ENCODE measurements at regions of chr10 and their contacts with region 1.

Region 1: GRCh38 chr10:102132563-102133372 is at the start of gene PPRC1:
- DNase-seq: peak; percentile 88 to 98 (median 97)
- ATAC-seq: peak; percentile 97
- H3K4me3 ChIP-seq: peak within 1 kb of the TSS; percentile 80
- H3K4me3 Mint-ChIP-seq: peak within 1 kb of the TSS; percentile 90 to 99 (median 98)
- H3K27ac ChIP-seq: peak within 1 kb of the TSS; percentile 89
- H3K27ac Mint-ChIP-seq: peak within 1 kb of the TSS; percentile 89 to 99 (median 96)
- H3K4me1 ChIP-seq: peaks cover 15 to 26% of the 10 kb centered on the region in 2 donors
- H3K4me1 Mint-ChIP-seq: peaks cover 29 to 53% (median 47%) of the 10 kb centered on the region in 7 donors
- H3K27me3 ChIP-seq: no peaks in the 10 kb centered on the region
- H3K27me3 Mint-ChIP-seq: no peaks in the 10 kb centered on the region
- total RNA-seq, gene PPRC1: 33.7 to 56.5 (median 40.6) TPM

Region 2: GRCh38 chr10:102055647-102056419 is 76.9 kb before region 1 on chr10 and contains the start of gene ARMH3:
- CTCF ChIA-PET with region 1: no interaction called
- POLR2A ChIA-PET with region 1: interaction called, 4 read pairs
- intact Hi-C with region 1: loop called (anchors 1 kb)
- DNase-seq: peak; percentile 72 to 90 (median 87)
- ATAC-seq: peak; percentile 98
- H3K4me3 ChIP-seq: peak within 1 kb of the TSS; percentile 92
- H3K4me3 Mint-ChIP-seq: peak within 1 kb of the TSS; percentile 89 to 98 (median 94)
- H3K27ac ChIP-seq: peak within 1 kb of the TSS; percentile 87
- H3K27ac Mint-ChIP-seq: peak within 1 kb of the TSS; percentile 76 to 97 (median 92)
- H3K4me1 ChIP-seq: peaks cover 18 to 20% of the 10 kb centered on the region in 2 donors
- H3K4me1 Mint-ChIP-seq: peaks cover 25 to 50% (median 42%) of the 10 kb centered on the region in 7 donors
- H3K27me3 ChIP-seq: no peaks in the 10 kb centered on the region
- H3K27me3 Mint-ChIP-seq: no peaks in the 10 kb centered on the region
- total RNA-seq, gene ARMH3: 26.7 to 34.0 (median 28.8) TPM

Region 3: GRCh38 chr10:102151774-102152544 is 19.2 kb after region 1 on chr10 and contains the start of gene NOLC1:
- CTCF ChIA-PET with region 1: interaction called, 13 read pairs
- POLR2A ChIA-PET with region 1: interaction called, 10 read pairs
- intact Hi-C with region 1: loop called (anchors 1 kb)
- DNase-seq: peak; percentile 95 to 100 (median 100)
- ATAC-seq: peak; percentile 97
- H3K4me3 ChIP-seq: peak within 1 kb of the TSS; percentile 87
- H3K4me3 Mint-ChIP-seq: peak within 1 kb of the TSS; percentile 91 to 98 (median 96)
- H3K27ac ChIP-seq: peak within 1 kb of the TSS; percentile 94
- H3K27ac Mint-ChIP-seq: peak within 1 kb of the TSS; percentile 91 to 98 (median 96)
- H3K4me1 ChIP-seq: peaks cover 11 to 16% of the 10 kb centered on the region in 2 donors
- H3K4me1 Mint-ChIP-seq: peaks cover 28 to 58% (median 43%) of the 10 kb centered on the region in 7 donors
- H3K27me3 ChIP-seq: no peaks in the 10 kb centered on the region
- H3K27me3 Mint-ChIP-seq: peaks cover 0 to 4% (median 0%) of the 10 kb centered on the region in 5 donors
- total RNA-seq, gene NOLC1: 45.1 to 98.5 (median 58.8) TPM

Region 4: GRCh38 chr10:102352066-102352715 is 219.4 kb after region 1 on chr10:
- CTCF ChIA-PET with region 1: no interaction called
- POLR2A ChIA-PET with region 1: no interaction called
- intact Hi-C with region 1: loop called in 1 of 2 experiments (anchors 1 kb)
- DNase-seq: peak; percentile 41 to 75 (median 64)
- ATAC-seq: peak; percentile 85
- H3K4me3 ChIP-seq: no peak overlapping the region
- H3K4me3 Mint-ChIP-seq: no peak overlapping the region
- H3K27ac ChIP-seq: no peak overlapping the region
- H3K27ac Mint-ChIP-seq: no peak overlapping the region
- H3K4me1 ChIP-seq: no peaks in the 10 kb centered on the region
- H3K4me1 Mint-ChIP-seq: peaks cover 0 to 3% (median 0%) of the 10 kb centered on the region in 7 donors
- H3K27me3 ChIP-seq: no peaks in the 10 kb centered on the region
- H3K27me3 Mint-ChIP-seq: no peaks in the 10 kb centered on the region

Region 5: DNA sequence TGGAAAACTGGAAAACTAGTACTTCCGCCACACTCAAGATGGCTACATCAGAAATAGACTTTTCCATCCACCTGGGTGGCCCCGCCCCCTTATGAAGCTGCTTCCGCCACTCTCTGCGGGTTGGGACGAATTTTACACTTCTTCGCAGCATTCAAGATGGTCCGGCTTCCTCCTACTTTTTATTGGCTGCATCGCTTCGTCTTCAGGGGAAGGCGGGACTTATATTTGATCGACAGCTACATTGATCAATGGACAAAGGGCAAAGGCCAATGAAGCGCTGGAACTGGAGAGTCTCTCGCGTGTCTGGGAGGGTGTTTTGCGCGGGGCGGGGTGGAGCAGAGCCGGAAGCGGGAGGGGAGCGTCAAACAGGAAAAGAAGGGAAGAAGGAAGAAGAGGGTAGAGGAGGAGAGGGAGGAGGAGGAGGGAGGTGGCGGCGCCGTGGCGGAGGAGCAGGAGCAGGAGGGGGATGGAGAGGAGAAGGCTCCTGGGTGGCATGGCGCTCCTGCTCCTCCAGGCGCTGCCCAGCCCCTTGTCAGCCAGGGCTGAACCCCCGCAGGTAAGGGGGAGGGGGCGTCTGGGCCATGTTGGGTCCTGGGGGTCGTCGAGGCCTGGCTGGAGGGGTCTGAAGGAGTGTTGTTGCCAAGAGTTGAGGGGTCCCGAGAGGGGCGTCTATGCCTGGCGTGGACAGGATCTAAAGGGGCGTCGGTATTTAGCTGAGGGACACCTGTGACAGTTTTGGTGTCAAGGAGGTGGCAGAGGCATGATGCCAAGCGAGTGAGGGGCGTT is 611.0 kb after region 1 on chr10 and contains the start of gene WBP1L:
- CTCF ChIA-PET with region 1: no interaction called
- POLR2A ChIA-PET with region 1: no interaction called
- intact Hi-C with region 1: loop called in 1 of 2 experiments (anchors 1 kb)
- DNase-seq: peak; percentile 77 to 98 (median 96)
- ATAC-seq: peak; percentile 98
- H3K4me3 ChIP-seq: peak within 1 kb of the TSS; percentile 85
- H3K4me3 Mint-ChIP-seq: peak within 1 kb of the TSS; percentile 80 to 97 (median 93)
- H3K27ac ChIP-seq: peak within 1 kb of the TSS; percentile 77
- H3K27ac Mint-ChIP-seq: peak within 1 kb of the TSS; percentile 57 to 96 (median 90)
- H3K4me1 ChIP-seq: peaks cover 17 to 25% of the 10 kb centered on the region in 2 donors
- H3K4me1 Mint-ChIP-seq: peaks cover 33 to 59% (median 48%) of the 10 kb centered on the region in 7 donors
- H3K27me3 ChIP-seq: no peaks in the 10 kb centered on the region
- H3K27me3 Mint-ChIP-seq: no peaks in the 10 kb centered on the region
- total RNA-seq, gene WBP1L: 20.5 to 37.9 (median 34.1) TPM